ENCODE measurements at regions of chr20 and their contacts with region 1.

Region 1: DNA sequence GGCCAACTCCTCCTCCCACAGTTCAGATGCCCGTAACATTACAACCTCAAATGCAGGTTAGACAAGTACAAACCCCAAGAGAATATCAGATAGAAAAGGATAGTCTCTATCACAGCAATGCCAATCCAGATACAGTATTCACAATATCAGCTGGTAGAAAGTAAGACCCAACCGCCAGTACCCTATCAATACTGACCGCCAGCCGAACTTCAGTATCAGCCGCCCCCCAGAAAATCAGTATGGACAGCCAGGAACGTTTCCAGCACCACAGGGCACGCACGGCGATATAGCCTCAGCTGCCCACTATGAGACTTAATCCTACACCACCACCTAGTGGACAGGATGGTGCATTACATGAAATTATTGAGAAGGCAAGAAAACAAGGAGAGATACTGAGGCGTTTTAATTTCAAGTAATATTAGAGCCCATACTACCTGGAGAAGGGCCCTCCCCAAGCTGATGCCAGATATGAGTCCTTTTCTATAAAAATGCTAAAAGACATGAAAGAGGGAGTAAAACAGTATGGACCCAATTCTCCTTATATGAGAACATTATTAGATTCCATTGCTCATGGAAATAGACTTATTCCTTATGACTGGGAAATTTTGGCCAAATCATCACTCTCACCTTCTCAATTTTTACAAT is 17.6 kb upstream of the EIF2S2 start:
- DNase-seq: peak; percentile 64 to 84 (median 69)
- ATAC-seq: peak; percentile 94
- H3K4me3 ChIP-seq: no peak overlapping the region
- H3K27ac ChIP-seq: no peak overlapping the region
- H3K4me1 ChIP-seq: peaks cover 7 to 12% of the 10 kb centered on the region in 2 experiments; a peak in 4 of 5 replicates
- H3K27me3 ChIP-seq: no peaks in the 10 kb centered on the region
- CTCF ChIP-seq: peak; percentile 81 to 95 (median 89)
- EP300 ChIP-seq: no peak
- POLR2A ChIP-seq: no peak
- RAD21 ChIP-seq: peak; percentile 86 to 93

Region 2: GRCh38 chr20:33862709-33863403 is 266.8 kb before region 1 on chr20:
- CTCF ChIA-PET with region 1: interaction called, 6 read pairs
- POLR2A ChIA-PET with region 1: no interaction called
- in situ Hi-C with region 1: no loop called
- intact Hi-C with region 1: loop called (anchors 2 kb)
- DNase-seq: peak; percentile 62 to 88 (median 84)
- ATAC-seq: peak; percentile 87
- H3K4me3 ChIP-seq: peak overlapping the region; percentile 23; the same call in 1 of the 2 replicates
- H3K27ac ChIP-seq: no peak overlapping the region
- H3K4me1 ChIP-seq: peaks cover 0 to 13% of the 10 kb centered on the region in 2 experiments; a peak in 3 of 5 replicates
- H3K27me3 ChIP-seq: peaks cover 11 to 34% of the 10 kb centered on the region in 2 experiments; a peak in 4 of 5 replicates
- CTCF ChIP-seq: peak; percentile 73 to 82 (median 79)
- EP300 ChIP-seq: no peak
- POLR2A ChIP-seq: no peak
- RAD21 ChIP-seq: peak; percentile 43 to 69; a peak in 3 of 4 replicates

Region 3: GRCh38 chr20:33915726-33916331 is 213.8 kb before region 1 on chr20:
- CTCF ChIA-PET with region 1: interaction called, 10 read pairs
- POLR2A ChIA-PET with region 1: no interaction called
- in situ Hi-C with region 1: no loop called
- intact Hi-C with region 1: no loop called
- DNase-seq: peak; percentile 70 to 84 (median 82)
- ATAC-seq: peak; percentile 96
- H3K4me3 ChIP-seq: no peak overlapping the region
- H3K27ac ChIP-seq: no peak overlapping the region
- H3K4me1 ChIP-seq: no peaks in the 10 kb centered on the region
- H3K27me3 ChIP-seq: peaks cover 14 to 36% of the 10 kb centered on the region in 2 experiments
- CTCF ChIP-seq: peak; percentile 78 to 93 (median 79)
- EP300 ChIP-seq: no peak
- POLR2A ChIP-seq: no peak
- RAD21 ChIP-seq: peak; percentile 27 to 69

Region 4: DNA sequence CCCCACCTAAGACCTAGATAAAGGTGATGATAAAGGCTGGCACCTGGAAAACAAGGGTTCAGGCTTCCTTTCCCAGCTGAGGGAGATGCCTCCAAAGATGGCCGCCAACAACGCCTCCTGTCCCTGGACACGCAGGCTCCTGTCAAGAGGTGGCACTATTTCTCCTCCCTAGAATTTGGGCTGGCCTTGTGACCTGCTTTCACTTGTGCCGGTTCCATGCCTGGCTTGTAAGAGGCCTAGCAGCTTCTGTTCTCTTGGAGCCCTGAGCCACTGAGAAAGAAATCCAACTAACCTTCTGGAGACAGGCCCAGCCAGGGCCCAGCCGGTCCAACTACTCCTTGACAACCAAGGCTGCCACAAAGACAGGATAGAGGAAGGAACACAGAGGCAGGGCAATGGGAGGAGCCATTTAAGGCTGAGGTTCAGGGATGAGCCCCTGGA is 196.2 kb before region 1 on chr20:
- CTCF ChIA-PET with region 1: no interaction called
- POLR2A ChIA-PET with region 1: no interaction called
- in situ Hi-C with region 1: loop called (anchors 5 kb)
- intact Hi-C with region 1: loop called (anchors 1 kb)
- DNase-seq: peak; percentile 70 to 82 (median 73)
- ATAC-seq: peak; percentile 99
- H3K4me3 ChIP-seq: no peak overlapping the region
- H3K27ac ChIP-seq: no peak overlapping the region
- H3K4me1 ChIP-seq: no peaks in the 10 kb centered on the region; a peak in 2 of 5 replicates
- H3K27me3 ChIP-seq: peaks cover 3 to 15% of the 10 kb centered on the region in 2 experiments; a peak in 4 of 5 replicates
- CTCF ChIP-seq: peak; percentile 85 to 93 (median 87)
- EP300 ChIP-seq: no peak
- POLR2A ChIP-seq: no peak
- RAD21 ChIP-seq: peak; percentile 89 to 94

Region 5: GRCh38 chr20:33947709-33948295 is 181.8 kb before region 1 on chr20:
- CTCF ChIA-PET with region 1: interaction called, 3 read pairs
- POLR2A ChIA-PET with region 1: no interaction called
- in situ Hi-C with region 1: no loop called
- intact Hi-C with region 1: loop called (anchors 5 kb)
- DNase-seq: peak; percentile 81 to 91 (median 88)
- ATAC-seq: peak; percentile 94
- H3K4me3 ChIP-seq: no peak overlapping the region
- H3K27ac ChIP-seq: no peak overlapping the region
- H3K4me1 ChIP-seq: no peaks in the 10 kb centered on the region
- H3K27me3 ChIP-seq: peaks cover 0 to 15% of the 10 kb centered on the region in 2 experiments; a peak in 3 of 5 replicates
- CTCF ChIP-seq: peak; percentile 92 to 99 (median 97)
- EP300 ChIP-seq: no peak
- POLR2A ChIP-seq: no peak
- RAD21 ChIP-seq: peak; percentile 58 to 94

Region 6: DNA sequence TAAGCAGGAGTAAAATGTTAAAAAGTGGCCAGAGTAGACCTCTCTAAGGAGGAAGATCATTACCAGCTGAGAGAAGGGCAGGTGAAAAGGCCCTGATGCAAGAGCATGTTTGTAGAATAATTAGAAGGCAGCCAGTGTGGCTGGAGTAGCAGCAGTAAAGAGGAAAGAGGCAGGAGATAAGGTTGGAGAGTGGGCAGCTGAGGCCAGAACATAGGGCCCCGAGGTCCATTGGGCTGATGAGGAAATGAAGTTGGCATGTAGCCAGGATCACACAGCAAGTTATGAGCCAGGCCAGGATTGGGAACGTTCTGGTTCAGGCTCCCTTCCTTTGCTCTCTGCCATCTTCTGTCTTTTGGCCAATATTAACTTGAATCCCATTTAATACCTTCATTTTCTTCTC is 84.3 kb before region 1 on chr20:
- CTCF ChIA-PET with region 1: no interaction called
- POLR2A ChIA-PET with region 1: no interaction called
- in situ Hi-C with region 1: no loop called
- intact Hi-C with region 1: no loop called
- DNase-seq: peak in 3 of 4 experiments; percentile 29 to 55 (median 39)
- ATAC-seq: peak; percentile 69; the same call in 2 of the 3 replicates
- H3K4me3 ChIP-seq: no peak overlapping the region
- H3K27ac ChIP-seq: no peak overlapping the region
- H3K4me1 ChIP-seq: peaks cover 0 to 12% of the 10 kb centered on the region in 2 experiments; a peak in 2 of 5 replicates
- H3K27me3 ChIP-seq: no peaks in the 10 kb centered on the region
- CTCF ChIP-seq: no peak
- EP300 ChIP-seq: no peak
- POLR2A ChIP-seq: no peak
- RAD21 ChIP-seq: no peak

Region 7: DNA sequence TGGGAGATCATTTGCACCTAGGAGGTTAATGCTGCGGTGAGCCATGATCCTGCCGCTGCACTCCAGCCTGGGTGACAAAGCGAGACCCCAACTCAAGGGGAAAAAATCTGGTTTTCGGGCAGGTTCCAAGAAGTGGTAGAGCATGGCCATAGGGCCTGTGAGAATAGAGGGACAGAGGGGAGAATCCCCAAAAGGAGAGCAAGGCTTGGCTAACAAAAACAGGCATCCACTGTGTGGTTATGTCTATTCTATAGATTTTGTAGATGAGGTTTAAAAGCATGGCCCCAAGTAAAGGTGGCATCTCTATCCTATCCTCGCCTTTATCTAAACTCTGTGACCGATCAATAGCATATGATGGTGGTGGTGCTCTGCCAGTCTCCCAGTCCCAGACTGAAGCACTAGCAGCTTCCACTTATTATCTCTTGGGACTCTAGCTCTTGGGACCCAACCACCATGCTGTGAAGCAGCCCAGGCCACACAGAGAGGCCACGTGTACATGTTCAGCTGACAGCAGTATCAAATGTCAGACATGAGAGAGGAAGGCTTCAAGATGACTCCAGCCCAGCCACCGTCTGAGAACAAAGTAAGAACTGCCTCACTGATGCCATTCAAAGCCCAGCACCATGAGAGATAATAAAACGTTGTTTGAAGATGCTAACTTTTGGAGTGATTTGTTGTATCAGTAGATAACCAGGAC is 45.3 kb before region 1 on chr20:
- CTCF ChIA-PET with region 1: no interaction called
- POLR2A ChIA-PET with region 1: no interaction called
- in situ Hi-C with region 1: no loop called
- intact Hi-C with region 1: loop called (anchors 1 kb)
- DNase-seq: peak in 1 of 4 experiments; percentile 53
- ATAC-seq: peak; percentile 28; the same call in 2 of the 3 replicates
- H3K4me3 ChIP-seq: no peak overlapping the region
- H3K27ac ChIP-seq: no peak overlapping the region
- H3K4me1 ChIP-seq: peaks cover 35 to 39% of the 10 kb centered on the region in 2 experiments
- H3K27me3 ChIP-seq: no peaks in the 10 kb centered on the region
- CTCF ChIP-seq: no peak
- EP300 ChIP-seq: no peak
- POLR2A ChIP-seq: no peak
- RAD21 ChIP-seq: no peak

Region 8: DNA sequence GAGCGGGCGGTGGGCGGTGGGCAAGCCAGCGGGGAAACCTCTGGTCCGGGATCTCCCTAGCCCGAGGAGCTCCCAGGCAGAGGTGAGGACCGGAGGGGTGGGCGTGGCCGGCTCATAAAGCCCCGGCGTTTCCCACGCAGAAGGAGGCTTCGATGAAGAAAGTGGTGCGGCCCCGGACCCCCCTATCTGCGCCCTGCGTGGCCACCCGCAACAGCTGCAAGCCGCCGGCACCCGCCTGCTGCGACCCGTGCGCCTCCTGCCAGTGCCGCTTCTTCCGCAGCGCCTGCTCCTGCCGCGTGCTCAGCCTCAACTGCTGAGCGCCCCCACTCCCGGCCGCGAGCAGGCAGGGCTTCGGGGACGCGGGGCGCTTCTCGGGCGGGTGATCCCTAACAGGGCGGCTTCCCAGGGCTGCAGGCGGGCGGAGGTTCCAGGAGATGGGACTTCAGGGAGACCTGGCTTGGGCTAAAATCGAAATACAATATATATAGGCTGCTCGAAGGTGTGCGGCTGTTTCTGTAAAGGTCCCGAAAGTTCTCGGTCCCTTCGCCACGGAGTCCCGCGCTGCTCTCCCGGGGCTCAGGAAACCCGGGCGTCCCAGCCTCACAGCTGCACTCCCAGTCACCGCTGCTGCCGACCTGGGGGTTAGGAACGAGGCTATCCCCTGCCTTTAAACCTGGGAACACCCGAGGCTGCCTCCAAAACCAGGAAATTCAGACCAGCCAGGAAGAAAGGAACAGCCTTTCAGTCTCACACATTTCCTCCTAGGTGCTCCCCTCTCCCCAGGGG is 139.4 kb after region 1 on chr20:
- CTCF ChIA-PET with region 1: no interaction called
- POLR2A ChIA-PET with region 1: no interaction called
- in situ Hi-C with region 1: no loop called
- intact Hi-C with region 1: no loop called
- DNase-seq: no peak
- ATAC-seq: no peak
- H3K4me3 ChIP-seq: no peak overlapping the region
- H3K27ac ChIP-seq: no peak overlapping the region
- H3K4me1 ChIP-seq: peaks cover 0 to 6% of the 10 kb centered on the region in 2 experiments; a peak in 1 of 5 replicates
- H3K27me3 ChIP-seq: no peaks in the 10 kb centered on the region
- CTCF ChIP-seq: no peak
- EP300 ChIP-seq: no peak
- POLR2A ChIP-seq: no peak
- RAD21 ChIP-seq: no peak

Measured in K562 (cell line).